Caco-2 (cell line): ENCODE measurements at regions of chrX and their contacts with region 1.

Region 1: GRCh38 chrX:49269010-49269767 is 404 bp upstream of the PPP1R3F start:
- DNase-seq: peak; percentile 94 to 97
- H3K4me3 ChIP-seq: peak overlapping the region; percentile 63
- H3K4me3 Mint-ChIP-seq: peak overlapping the region; percentile 96
- H3K27ac Mint-ChIP-seq: peak overlapping the region; percentile 99
- H3K4me1 ChIP-seq: peaks cover 12% of the 10 kb centered on the region; the same call in 1 of the 2 replicates
- H3K4me1 Mint-ChIP-seq: peaks cover 25% of the 10 kb centered on the region
- H3K27me3 ChIP-seq: no peaks in the 10 kb centered on the region
- H3K27me3 Mint-ChIP-seq: no peaks in the 10 kb centered on the region
- CTCF ChIP-seq: no peak

Region 2: GRCh38 chrX:49155900-49156837 is 113.0 kb before region 1 on chrX:
- CTCF ChIA-PET with region 1: interaction called, 10 read pairs
- POLR2A ChIA-PET with region 1: no interaction called
- intact Hi-C with region 1: no loop called
- DNase-seq: peak; percentile 89 to 91
- H3K4me3 ChIP-seq: peak overlapping the region; percentile 63
- H3K4me3 Mint-ChIP-seq: peak overlapping the region; percentile 98
- H3K27ac Mint-ChIP-seq: peak overlapping the region; percentile 93
- H3K4me1 ChIP-seq: no peaks in the 10 kb centered on the region
- H3K4me1 Mint-ChIP-seq: no peaks in the 10 kb centered on the region
- H3K27me3 ChIP-seq: no peaks in the 10 kb centered on the region
- H3K27me3 Mint-ChIP-seq: no peaks in the 10 kb centered on the region
- CTCF ChIP-seq: peak; percentile 41 to 73

Region 3: DNA sequence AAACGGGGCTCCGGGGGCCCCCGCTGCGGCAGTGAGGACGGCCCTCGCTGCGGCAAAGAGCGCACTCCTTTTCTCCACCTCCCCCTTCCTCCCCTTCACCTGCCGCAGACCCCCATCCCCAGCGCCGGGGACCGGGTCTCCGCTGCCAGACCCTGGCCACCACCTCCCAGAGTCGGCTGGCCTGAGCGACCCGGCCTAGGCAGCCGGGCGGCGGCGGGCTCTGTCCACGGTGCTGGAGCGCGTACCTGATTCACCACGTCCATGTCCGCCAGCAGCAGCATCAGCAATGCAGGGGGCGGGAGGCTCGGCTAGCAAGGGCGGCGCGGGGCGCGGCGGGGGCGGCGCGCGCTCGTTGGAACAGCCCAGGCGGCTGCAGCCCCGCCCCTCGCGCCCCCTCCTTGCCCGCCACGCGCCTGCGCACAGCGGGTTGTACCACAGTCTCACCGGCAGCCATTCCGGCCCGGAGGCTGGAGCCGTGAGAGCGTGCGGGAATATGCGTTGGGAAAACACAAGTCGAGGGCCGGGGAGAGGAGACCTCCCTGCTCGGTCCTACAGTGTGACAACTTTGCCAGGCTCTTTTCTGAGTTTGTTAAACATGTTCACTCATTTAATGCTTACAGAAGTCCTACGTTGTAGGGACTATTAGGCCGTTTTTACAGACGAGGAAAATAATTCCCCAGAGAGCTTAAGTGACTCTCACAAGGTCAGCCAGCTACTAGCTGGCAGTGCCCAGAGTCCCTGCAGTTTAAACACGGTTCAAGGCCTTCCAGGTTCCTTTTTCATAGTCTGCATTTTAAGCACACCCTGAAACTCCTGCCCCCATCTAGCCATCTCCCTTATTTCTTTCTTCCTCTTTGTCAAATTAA is 69.0 kb before region 1 on chrX and contains the start of gene SYP:
- CTCF ChIA-PET with region 1: no interaction called
- POLR2A ChIA-PET with region 1: interaction called, 3 read pairs
- intact Hi-C with region 1: loop called (anchors 2 kb)
- DNase-seq: peak; percentile 90 to 92
- H3K4me3 ChIP-seq: peak within 1 kb of the TSS; percentile 52
- H3K4me3 Mint-ChIP-seq: peak within 1 kb of the TSS; percentile 54
- H3K27ac Mint-ChIP-seq: peak within 1 kb of the TSS; percentile 26
- H3K4me1 ChIP-seq: peaks cover 16% of the 10 kb centered on the region; the same call in 1 of the 2 replicates
- H3K4me1 Mint-ChIP-seq: peaks cover 18% of the 10 kb centered on the region
- H3K27me3 ChIP-seq: no peaks in the 10 kb centered on the region
- H3K27me3 Mint-ChIP-seq: no peaks in the 10 kb centered on the region
- CTCF ChIP-seq: no peak
- total RNA-seq, gene SYP: 18.3 and 23.3 TPM in 2 replicates